Colonic mucosa (tissue), 4 donors: ENCODE measurements at regions of chr1 and their contacts with region 1.

Region 1: GRCh38 chr1:239951511-239952140 is 140.1 kb upstream of the FMN2 start:
- DNase-seq: peak; percentile 73
- H3K4me3 ChIP-seq: no peak overlapping the region
- H3K27ac ChIP-seq: no peak overlapping the region
- H3K4me1 ChIP-seq: no peaks in the 10 kb centered on the region
- H3K27me3 ChIP-seq: no peaks in the 10 kb centered on the region
- CTCF ChIP-seq: peak; percentile 78

Region 2: GRCh38 chr1:239841631-239842030 is 110.0 kb before region 1 on chr1:
- intact Hi-C with region 1: no loop called
- DNase-seq: no peak
- H3K4me3 ChIP-seq: no peak overlapping the region
- H3K27ac ChIP-seq: no peak overlapping the region
- H3K4me1 ChIP-seq: no peaks in the 10 kb centered on the region
- H3K27me3 ChIP-seq: no peaks in the 10 kb centered on the region
- CTCF ChIP-seq: no peak

Region 3: GRCh38 chr1:239976130-239976968 is 24.7 kb after region 1 on chr1:
- intact Hi-C with region 1: loop called (anchors 2 kb)
- DNase-seq: peak; percentile 48
- H3K4me3 ChIP-seq: no peak overlapping the region
- H3K27ac ChIP-seq: no peak overlapping the region
- H3K4me1 ChIP-seq: no peaks in the 10 kb centered on the region
- H3K27me3 ChIP-seq: no peaks in the 10 kb centered on the region
- CTCF ChIP-seq: peak; percentile 93

Region 4: DNA sequence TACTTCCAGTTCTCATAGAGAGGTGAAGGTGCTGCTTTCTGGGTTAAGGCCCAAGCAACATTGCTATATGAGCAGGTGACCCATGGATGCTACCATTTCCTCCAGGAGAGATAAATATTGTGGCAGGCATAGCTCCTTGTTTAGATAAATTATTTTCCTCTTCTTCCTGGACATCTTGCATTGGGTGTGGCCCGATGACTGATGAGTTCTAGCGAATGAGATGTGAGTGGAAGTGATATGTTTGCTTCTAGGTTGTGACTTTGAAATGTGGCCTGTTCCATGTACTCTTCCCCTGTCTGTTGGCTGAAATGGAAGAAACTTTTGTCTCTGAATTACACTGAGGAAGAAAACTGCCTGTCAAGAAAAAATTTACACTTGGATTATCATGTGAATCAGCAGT is 38.4 kb after region 1 on chr1:
- intact Hi-C with region 1: loop called (anchors 2 kb)
- DNase-seq: no peak
- H3K4me3 ChIP-seq: no peak overlapping the region
- H3K27ac ChIP-seq: no peak overlapping the region
- H3K4me1 ChIP-seq: no peaks in the 10 kb centered on the region
- H3K27me3 ChIP-seq: peaks cover 3% of the 10 kb centered on the region
- CTCF ChIP-seq: no peak